Sigmoid colon (tissue), 7 donors: ENCODE measurements at regions of chr12 and their contacts with region 1.

Region 1: DNA sequence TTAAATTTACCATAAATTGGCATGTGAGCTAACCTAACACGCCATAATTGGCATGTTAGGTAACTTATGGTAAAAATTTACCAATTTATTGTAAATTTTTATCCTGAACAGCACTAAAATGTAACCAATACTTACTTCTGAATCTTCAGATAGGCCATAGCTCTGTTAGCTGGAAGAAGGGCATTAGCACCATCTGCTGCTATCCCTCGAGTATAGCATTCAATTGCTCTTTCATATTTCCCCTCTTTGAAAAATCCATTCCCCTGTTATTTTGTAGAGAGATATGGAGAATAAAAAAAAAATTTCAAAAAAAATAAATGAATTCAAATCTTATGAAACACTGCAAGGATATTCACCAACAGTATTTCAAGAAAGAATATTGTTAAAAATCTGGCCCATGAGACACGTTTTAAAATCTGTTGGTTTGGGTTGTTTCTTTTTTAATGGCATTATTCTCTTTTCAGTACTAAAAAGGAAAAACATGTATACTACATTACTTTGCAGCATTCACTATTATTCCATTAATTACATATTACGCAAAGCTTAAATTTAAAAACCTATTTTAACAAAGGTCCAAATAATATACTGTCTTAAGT is 19.1 kb downstream of the RPAP3 start:
- DNase-seq: no peak
- H3K4me3 ChIP-seq: no peak overlapping the region
- H3K27ac ChIP-seq: no peak overlapping the region
- H3K4me1 ChIP-seq: no peaks in the 10 kb centered on the region
- H3K27me3 ChIP-seq: no peaks in the 10 kb centered on the region
- CTCF ChIP-seq: peak; percentile 60 to 69 (median 66)
- EP300 ChIP-seq: no peak
- POLR2A ChIP-seq: no peak

Region 2: DNA sequence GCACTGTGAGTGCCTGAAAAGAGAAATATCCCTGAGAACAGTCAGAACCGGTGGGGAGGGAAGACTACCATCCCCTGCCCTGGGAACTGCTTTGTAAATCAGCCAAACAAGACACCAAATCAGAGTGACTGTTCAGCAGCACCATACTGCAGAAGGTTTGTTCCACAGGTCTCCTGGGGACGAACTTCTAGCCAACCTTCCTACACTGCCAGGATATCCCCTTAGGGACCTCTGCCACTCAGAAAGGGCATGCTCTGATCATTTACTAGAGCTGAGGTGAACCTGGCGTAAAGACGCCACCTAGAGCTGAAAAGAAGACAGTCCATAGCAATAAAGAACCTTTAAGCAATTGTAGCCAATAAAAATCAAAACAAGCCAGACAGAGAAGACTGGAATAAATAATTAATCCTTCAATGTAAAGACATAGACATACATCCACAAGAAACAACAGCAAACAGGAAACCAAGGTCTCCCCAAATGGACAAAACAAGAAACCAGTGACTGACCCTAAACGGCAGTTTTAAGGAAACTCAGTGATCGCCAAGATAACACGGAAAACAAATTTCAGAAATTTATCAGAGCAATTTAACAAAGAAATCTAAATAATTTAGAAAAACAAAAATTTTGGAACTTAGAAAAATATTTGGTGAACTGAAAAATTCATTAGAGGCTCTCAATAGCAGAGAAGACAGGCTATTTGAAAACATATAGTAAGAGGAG is 378.9 kb before region 1 on chr12:
- intact Hi-C with region 1: loop called (anchors 5 kb)
- DNase-seq: no peak
- H3K4me3 ChIP-seq: no peak overlapping the region
- H3K27ac ChIP-seq: no peak overlapping the region
- H3K4me1 ChIP-seq: peaks cover 0 to 8% (median 3%) of the 10 kb centered on the region in 4 donors
- H3K27me3 ChIP-seq: no peaks in the 10 kb centered on the region
- CTCF ChIP-seq: peak in 3 of 4 experiments; percentile 25 to 45 (median 29)
- EP300 ChIP-seq: no peak
- POLR2A ChIP-seq: no peak

Region 3: DNA sequence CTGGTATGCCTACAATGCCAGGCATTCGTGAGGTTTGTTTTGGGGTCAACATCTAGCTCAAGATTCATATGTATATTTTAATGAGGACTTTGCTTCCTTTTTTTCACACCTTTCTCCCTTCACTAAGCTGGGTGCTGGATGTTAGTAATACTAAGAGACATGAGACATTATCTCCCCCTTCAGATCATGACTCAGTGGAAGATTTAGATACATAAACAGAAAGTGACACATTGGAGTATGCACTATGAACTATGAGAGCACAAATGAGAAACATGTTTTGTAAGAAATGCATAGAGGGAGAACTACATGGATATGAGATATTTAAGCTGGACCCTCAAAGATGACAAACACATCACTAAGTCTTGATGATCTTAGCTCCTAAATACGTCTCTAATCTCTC is 267.2 kb before region 1 on chr12:
- intact Hi-C with region 1: loop called (anchors 10 kb)
- DNase-seq: no peak
- H3K4me3 ChIP-seq: no peak overlapping the region
- H3K27ac ChIP-seq: no peak overlapping the region
- H3K4me1 ChIP-seq: peaks cover 0 to 18% (median 13%) of the 10 kb centered on the region in 4 donors
- H3K27me3 ChIP-seq: no peaks in the 10 kb centered on the region
- CTCF ChIP-seq: no peak
- EP300 ChIP-seq: no peak
- POLR2A ChIP-seq: no peak

Region 4: DNA sequence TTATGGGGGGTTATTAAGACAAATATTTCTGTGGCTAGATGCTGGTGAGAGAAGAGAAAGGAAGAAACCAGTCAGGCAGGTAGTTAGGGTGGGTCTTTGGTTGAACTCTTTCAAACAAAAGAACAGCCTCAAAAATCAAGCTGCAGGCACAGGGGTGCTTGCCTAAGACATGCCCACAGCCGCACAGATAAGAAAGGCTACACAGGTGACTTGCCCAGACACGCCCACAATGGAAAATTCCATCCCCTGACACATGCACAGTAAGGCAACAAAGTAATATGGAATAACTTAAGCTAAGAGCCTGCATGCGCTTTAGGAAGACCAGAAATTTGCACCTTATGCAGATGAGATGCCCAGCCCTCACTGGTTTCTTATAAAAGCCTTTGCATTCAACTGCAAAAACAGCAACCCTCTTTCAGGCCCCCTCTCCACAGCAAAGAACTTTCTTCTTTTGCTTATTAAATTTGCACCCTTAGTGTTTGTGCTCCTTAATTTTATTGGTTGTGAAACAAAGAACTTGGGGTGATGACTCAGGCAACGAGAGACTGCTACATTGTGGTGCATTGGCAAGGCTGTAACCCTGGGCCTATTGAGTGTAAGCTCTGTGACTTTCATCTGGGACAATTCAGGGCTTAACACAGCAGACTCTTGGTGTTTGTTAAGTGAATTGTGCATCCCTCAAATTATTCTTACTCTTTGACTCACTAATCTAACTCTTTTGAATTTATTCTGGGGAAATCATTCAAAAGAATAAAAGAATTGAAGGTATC is 130.3 kb before region 1 on chr12:
- intact Hi-C with region 1: loop called (anchors 5 kb)
- DNase-seq: no peak
- H3K4me3 ChIP-seq: no peak overlapping the region
- H3K27ac ChIP-seq: peak overlapping the region in 3 of 4 donors; percentile 77 to 86 (median 84)
- H3K4me1 ChIP-seq: peaks cover 0 to 72% (median 45%) of the 10 kb centered on the region in 4 donors
- H3K27me3 ChIP-seq: no peaks in the 10 kb centered on the region
- CTCF ChIP-seq: no peak
- EP300 ChIP-seq: no peak
- POLR2A ChIP-seq: no peak

Region 5: DNA sequence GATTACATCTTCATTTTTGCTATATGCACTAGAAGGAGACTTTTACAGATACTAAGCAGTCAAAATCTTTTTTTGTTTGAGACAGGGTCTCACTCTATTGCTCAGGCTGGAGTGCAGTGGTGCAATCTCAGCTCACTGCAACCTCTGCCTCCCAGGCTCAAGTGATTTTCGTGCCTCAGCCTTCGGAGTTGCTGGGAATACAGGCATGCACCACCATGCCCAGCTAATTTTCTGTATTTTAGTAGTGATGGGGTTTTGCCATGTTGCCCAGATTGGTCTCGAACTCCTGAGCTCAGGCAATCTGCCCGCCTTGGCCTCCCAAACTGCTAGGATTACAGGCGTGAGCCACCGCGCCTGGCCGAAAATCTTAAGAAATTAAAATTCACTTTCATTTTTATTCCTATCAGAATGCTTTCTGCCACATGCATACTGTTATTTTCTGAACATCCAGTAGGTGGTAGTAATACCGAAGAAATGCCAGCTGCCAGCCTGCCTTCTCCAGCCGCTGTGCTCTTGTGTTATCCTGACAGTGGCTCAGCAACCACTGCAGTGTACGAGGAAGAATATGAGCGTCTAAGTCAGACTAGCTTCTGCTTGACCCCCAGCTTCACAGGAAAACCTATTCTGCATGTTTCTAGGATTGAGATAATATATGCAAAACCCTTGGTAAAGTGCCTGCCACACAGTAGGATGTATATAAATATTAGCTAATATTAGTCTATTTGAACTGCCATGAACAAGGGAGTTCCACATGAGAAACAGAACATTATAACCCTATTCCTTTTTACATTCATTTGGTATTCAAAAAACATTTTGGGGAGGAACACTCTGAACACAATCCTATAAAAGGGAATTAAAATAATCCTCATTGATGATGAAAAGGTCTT is 35.1 kb before region 1 on chr12:
- intact Hi-C with region 1: loop called (anchors 2 kb)
- DNase-seq: peak; percentile 84
- H3K4me3 ChIP-seq: no peak overlapping the region
- H3K27ac ChIP-seq: peak overlapping the region in 3 of 4 donors; percentile 55 to 72 (median 71)
- H3K4me1 ChIP-seq: peaks cover 0 to 44% (median 31%) of the 10 kb centered on the region in 4 donors
- H3K27me3 ChIP-seq: no peaks in the 10 kb centered on the region
- CTCF ChIP-seq: peak; percentile 57 to 81 (median 71)
- EP300 ChIP-seq: no peak
- POLR2A ChIP-seq: no peak